Activated CD4-positive, alpha-beta memory T cell treated with anti-CD3 and anti-CD28 coated beads for 36 hours (primary cell): ENCODE measurements at regions of chr1 and their contacts with region 1.

Region 1: GRCh38 chr1:46184920-46185658 is 8.8 kb upstream of the P3R3URF start:
- DNase-seq: peak; percentile 87
- H3K4me3 Mint-ChIP-seq: peak overlapping the region; percentile 69
- H3K27ac Mint-ChIP-seq: peak overlapping the region; percentile 89
- H3K4me1 Mint-ChIP-seq: peaks cover 22% of the 10 kb centered on the region
- H3K27me3 Mint-ChIP-seq: no peaks in the 10 kb centered on the region

Region 2: GRCh38 chr1:46148318-46148717 is 36.8 kb before region 1 on chr1:
- CTCF ChIA-PET with region 1: no interaction called
- POLR2A ChIA-PET with region 1: no interaction called
- intact Hi-C with region 1: no loop called
- DNase-seq: no peak
- H3K4me3 Mint-ChIP-seq: no peak overlapping the region
- H3K27ac Mint-ChIP-seq: no peak overlapping the region
- H3K4me1 Mint-ChIP-seq: no peaks in the 10 kb centered on the region
- H3K27me3 Mint-ChIP-seq: no peaks in the 10 kb centered on the region

Region 3: DNA sequence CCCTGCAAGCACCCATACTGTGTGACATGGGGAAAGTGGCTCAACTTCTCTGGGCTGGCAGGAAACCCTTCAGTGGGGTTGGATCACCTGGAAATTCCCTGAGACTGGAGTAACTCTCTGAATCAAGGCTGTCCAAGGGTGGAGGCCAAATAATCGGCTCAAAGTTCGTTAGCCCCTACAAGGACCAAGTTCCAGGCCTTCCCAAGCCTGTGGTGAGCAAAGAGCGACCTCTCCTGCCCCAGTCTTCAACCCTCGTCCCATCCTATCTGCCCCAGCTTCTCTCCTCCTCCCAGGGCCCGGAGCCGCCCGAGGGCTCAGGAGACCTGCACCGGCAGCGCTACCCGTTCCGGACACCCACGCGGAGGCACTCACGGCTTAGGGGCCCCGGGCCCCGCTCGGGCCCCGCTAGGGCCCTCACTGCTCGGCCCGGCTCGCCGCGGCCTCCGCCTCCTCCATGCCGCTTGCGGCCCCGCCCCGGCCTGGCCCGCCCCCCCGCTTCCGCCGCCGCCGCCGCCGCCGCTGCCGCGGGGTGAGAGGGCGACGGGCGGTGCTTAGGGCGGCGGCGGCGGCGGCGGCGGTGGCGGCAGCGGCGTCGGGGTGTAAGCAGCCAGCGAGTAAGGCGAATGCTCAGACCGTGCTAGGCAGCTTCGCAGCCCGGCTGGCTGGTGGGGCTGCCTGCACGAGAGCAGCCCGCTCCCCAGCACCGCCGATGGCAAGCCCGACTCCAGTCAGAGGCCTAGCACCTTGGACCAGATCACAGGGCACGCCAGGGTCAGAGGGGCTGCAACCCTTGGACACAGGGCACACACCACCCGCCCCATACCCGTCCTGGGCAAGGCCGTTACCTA is 13.1 kb after region 1 on chr1 and contains the start of gene POMGNT1:
- CTCF ChIA-PET with region 1: interaction called, 4 read pairs
- POLR2A ChIA-PET with region 1: interaction called, 3 read pairs
- intact Hi-C with region 1: loop called (anchors 1 kb)
- DNase-seq: peak; percentile 85
- H3K4me3 Mint-ChIP-seq: peak within 1 kb of the TSS; percentile 82
- H3K27ac Mint-ChIP-seq: peak within 1 kb of the TSS; percentile 58
- H3K4me1 Mint-ChIP-seq: peaks cover 26% of the 10 kb centered on the region
- H3K27me3 Mint-ChIP-seq: peaks cover 2% of the 10 kb centered on the region
- total RNA-seq, gene POMGNT1: 43.6 to 44.1 TPM

Region 4: GRCh38 chr1:46236882-46237281 is 51.8 kb after region 1 on chr1:
- CTCF ChIA-PET with region 1: no interaction called
- POLR2A ChIA-PET with region 1: no interaction called
- intact Hi-C with region 1: no loop called
- DNase-seq: no peak
- H3K4me3 Mint-ChIP-seq: no peak overlapping the region
- H3K27ac Mint-ChIP-seq: no peak overlapping the region
- H3K4me1 Mint-ChIP-seq: no peaks in the 10 kb centered on the region
- H3K27me3 Mint-ChIP-seq: no peaks in the 10 kb centered on the region